Activated CD4-positive, alpha-beta T cell treated with anti-CD3 and anti-CD28 coated beads for 36 hours (primary cell): ENCODE measurements at regions of chr4 and their contacts with region 1.

Region 1: DNA sequence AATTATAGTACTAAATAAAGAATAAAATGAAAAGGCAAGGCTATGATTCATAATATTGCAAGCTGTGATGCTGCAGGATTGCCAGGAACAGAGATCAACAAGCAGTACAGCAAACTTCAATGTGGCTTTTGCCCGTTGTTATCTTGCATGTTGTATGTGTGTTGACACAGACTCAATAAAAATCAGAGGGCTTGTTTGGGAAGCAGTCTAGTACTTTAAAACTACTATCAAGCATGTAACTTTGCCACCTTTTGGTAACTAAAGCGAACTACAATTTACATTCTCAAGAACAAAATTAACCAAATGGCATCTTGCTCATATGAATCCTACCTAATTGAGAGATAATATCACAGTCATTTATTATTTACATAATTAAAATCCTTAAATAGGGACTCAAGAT is 79.8 kb upstream of the GPM6A start:
- DNase-seq: no peak
- ATAC-seq: no peak
- H3K4me3 Mint-ChIP-seq: no peak overlapping the region
- H3K27ac Mint-ChIP-seq: no peak overlapping the region
- H3K4me1 Mint-ChIP-seq: no peaks in the 10 kb centered on the region
- H3K27me3 Mint-ChIP-seq: no peaks in the 10 kb centered on the region

Region 2: GRCh38 chr4:174873931-174874330 is 1017.9 kb before region 1 on chr4:
- CTCF ChIA-PET with region 1: no interaction called
- POLR2A ChIA-PET with region 1: no interaction called
- intact Hi-C with region 1: loop called in 1 of 2 experiments (anchors 10 kb)
- DNase-seq: no peak
- ATAC-seq: no peak
- H3K4me3 Mint-ChIP-seq: no peak overlapping the region
- H3K27ac Mint-ChIP-seq: no peak overlapping the region
- H3K4me1 Mint-ChIP-seq: no peaks in the 10 kb centered on the region
- H3K27me3 Mint-ChIP-seq: no peaks in the 10 kb centered on the region